ENCODE measurements at regions of chr21 and their contacts with region 1.

Region 1: DNA sequence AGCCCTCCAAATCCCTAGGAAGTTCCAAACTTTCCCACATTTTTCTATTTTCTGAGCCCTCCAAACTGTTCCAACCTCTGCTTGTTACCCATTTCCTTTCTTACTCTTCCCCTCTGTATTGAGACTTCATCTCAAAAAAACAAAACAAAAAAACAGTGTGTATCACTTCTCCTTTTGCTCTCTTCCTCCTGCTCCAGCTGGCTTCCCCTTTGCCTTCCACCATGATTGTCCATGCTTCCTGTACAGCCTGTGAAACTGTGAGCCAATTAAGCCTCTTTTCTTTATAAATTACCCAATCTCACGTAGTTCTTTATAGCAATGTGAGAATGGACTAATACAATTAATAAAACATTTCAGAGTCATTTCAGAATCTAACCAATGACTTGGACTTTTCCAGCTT is 69.6 kb upstream of the KRTAP19-8 start:
- DNase-seq: no peak
- ATAC-seq: peak in 6 of 8 donors; percentile 41 to 69 (median 56)
- H3K4me3 ChIP-seq: no peak overlapping the region
- H3K27ac ChIP-seq: peak overlapping the region in 1 of 10 donors; percentile 75
- H3K4me1 ChIP-seq: peaks cover 0 to 30% (median 0%) of the 10 kb centered on the region in 9 donors
- H3K27me3 ChIP-seq: peaks cover 0 to 11% (median 3%) of the 10 kb centered on the region in 7 donors
- CTCF ChIP-seq: no peak

Region 2: DNA sequence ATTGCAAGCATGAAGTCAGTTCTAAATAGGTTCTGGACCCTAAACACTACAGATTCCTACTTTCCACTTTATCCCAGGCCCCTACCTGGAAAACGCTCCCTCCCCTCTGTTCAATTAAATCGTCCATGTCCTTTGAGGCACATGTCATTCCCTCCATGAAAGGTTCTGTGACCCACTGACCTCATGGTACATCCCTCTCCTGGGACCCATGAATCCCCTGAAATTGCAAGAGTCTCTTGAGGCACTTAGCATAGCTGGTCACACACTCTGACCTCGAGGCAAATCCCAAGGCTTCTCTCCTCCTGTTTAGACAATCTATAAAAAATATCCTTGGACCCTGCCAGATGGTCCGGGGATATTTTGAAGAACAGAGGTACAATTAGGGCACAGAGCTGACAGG is 35.3 kb before region 1 on chr21:
- intact Hi-C with region 1: no loop called
- DNase-seq: no peak
- ATAC-seq: no peak
- H3K4me3 ChIP-seq: no peak overlapping the region
- H3K27ac ChIP-seq: no peak overlapping the region
- H3K4me1 ChIP-seq: no peaks in the 10 kb centered on the region
- H3K27me3 ChIP-seq: peaks cover 0 to 7% (median 0%) of the 10 kb centered on the region in 7 donors
- CTCF ChIP-seq: no peak

Region 3: GRCh38 chr21:31173881-31174555 is 66.1 kb after region 1 on chr21:
- intact Hi-C with region 1: loop called in 1 of 10 experiments (anchors 5 kb)
- DNase-seq: peak; percentile 29 to 41
- ATAC-seq: peak; percentile 70 to 90 (median 86)
- H3K4me3 ChIP-seq: peak overlapping the region in 3 of 10 donors; percentile 1 to 9 (median 5)
- H3K27ac ChIP-seq: peak overlapping the region in 6 of 10 donors; percentile 2 to 54 (median 36)
- H3K4me1 ChIP-seq: peaks cover 0 to 35% (median 15%) of the 10 kb centered on the region in 9 donors
- H3K27me3 ChIP-seq: no peaks in the 10 kb centered on the region
- CTCF ChIP-seq: no peak

Region 4: GRCh38 chr21:31180256-31181081 is 72.6 kb after region 1 on chr21:
- intact Hi-C with region 1: loop called in 1 of 10 experiments (anchors 5 kb)
- DNase-seq: no peak
- ATAC-seq: peak in 2 of 8 donors; percentile 52 to 55
- H3K4me3 ChIP-seq: no peak overlapping the region
- H3K27ac ChIP-seq: no peak overlapping the region
- H3K4me1 ChIP-seq: peaks cover 0 to 14% (median 0%) of the 10 kb centered on the region in 9 donors
- H3K27me3 ChIP-seq: peaks cover 0 to 4% (median 0%) of the 10 kb centered on the region in 7 donors
- CTCF ChIP-seq: peak; percentile 28 to 77 (median 64)

Region 5: DNA sequence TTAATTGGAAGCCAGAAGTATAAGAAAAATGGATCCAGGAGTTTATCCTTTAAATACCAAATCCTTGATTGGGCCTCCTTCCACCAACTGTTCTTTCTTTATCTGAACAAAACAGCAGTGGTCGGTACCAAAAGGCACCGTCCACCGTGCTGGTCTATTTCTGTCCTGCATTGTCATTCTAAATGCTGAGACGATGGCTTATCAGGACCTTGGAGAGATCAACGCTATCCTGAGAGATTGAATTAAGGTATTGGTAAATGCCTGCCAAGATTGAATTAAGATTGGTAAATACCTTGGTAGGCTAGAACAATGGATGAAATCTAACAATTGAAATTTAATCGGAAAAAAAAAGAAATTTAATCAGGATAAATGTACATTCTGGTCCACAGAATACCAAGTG is 478.2 kb after region 1 on chr21:
- intact Hi-C with region 1: loop called in 1 of 10 experiments (anchors 5 kb)
- DNase-seq: no peak
- ATAC-seq: no peak
- H3K4me3 ChIP-seq: no peak overlapping the region
- H3K27ac ChIP-seq: no peak overlapping the region
- H3K4me1 ChIP-seq: peaks cover 0 to 9% (median 0%) of the 10 kb centered on the region in 9 donors
- H3K27me3 ChIP-seq: no peaks in the 10 kb centered on the region
- CTCF ChIP-seq: no peak

Region 6: GRCh38 chr21:31604591-31605190 is 496.8 kb after region 1 on chr21:
- intact Hi-C with region 1: loop called in 1 of 10 experiments (anchors 10 kb)
- DNase-seq: peak; percentile 39 to 66
- ATAC-seq: peak in 6 of 8 donors; percentile 46 to 76 (median 56)
- H3K4me3 ChIP-seq: no peak overlapping the region
- H3K27ac ChIP-seq: no peak overlapping the region
- H3K4me1 ChIP-seq: no peaks in the 10 kb centered on the region
- H3K27me3 ChIP-seq: peaks cover 0 to 11% (median 0%) of the 10 kb centered on the region in 7 donors
- CTCF ChIP-seq: peak; percentile 76 to 96 (median 90)